PC-9 (cell line): ENCODE measurements at regions of chr20 and their contacts with region 1.

Region 1: DNA sequence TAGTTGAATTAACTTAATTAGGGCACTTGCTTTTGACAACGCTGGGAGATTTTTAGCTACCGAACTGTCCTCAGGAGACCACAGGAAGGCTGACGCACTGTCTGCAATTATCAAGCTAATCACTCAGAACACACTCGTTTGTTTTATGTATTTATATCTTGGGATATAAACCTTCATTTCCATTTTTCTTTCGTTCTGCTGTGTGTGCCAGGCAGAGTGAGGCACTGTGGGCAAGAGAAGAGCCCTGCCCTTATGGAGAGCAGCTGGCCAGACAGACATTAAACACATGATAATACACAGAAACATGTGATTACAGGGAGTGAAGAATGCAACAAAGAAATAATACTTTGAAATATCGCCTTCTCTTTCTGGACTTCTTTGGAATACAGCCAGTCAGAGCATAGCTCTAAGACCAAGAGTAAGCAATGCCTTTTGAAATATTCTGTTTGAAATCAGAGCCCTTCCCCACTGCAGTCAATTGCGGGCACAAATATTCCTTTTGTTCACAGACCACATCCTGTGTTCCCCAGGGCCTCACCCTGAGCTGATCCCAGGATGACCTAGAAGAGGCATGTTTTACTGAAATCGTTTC is 96.8 kb downstream of the ANKRD60 start:
- DNase-seq: peak; percentile 73 to 95
- H3K4me3 ChIP-seq: peak overlapping the region; percentile 35; the same call in 1 of the 2 replicates
- H3K27ac ChIP-seq: peak overlapping the region; percentile 87
- H3K4me1 ChIP-seq: peaks cover 97% of the 10 kb centered on the region
- H3K27me3 ChIP-seq: no peaks in the 10 kb centered on the region
- CTCF ChIP-seq: no peak

Region 2: DNA sequence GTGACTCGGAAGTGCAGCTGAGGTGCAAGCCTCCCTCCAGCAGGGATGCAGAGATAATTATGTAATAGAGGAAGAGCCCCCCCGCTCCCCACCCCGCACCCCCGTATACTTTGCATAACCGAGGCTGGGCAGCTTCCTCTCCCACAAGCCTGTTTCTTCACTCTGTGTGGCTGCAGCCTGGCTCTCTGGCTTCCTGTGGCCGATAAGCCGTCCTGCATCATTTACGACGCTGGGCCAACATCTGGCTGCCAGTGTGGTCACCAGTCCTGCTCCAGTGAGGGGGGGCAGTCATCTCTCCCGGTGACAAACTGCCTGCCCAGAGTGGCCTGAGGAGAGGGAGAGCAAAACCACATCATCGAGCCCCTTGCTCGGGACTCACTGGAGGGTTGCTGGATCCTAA is 681.2 kb before region 1 on chr20:
- CTCF ChIA-PET with region 1: no interaction called
- POLR2A ChIA-PET with region 1: interaction called, 11 read pairs
- intact Hi-C with region 1: no loop called
- DNase-seq: no peak
- H3K4me3 ChIP-seq: no peak overlapping the region
- H3K27ac ChIP-seq: no peak overlapping the region
- H3K4me1 ChIP-seq: peaks cover 6% of the 10 kb centered on the region; the same call in 1 of the 2 replicates
- H3K27me3 ChIP-seq: peaks cover 83% of the 10 kb centered on the region
- CTCF ChIP-seq: no peak

Region 3: GRCh38 chr20:57738481-57738880 is 393.2 kb before region 1 on chr20:
- CTCF ChIA-PET with region 1: no interaction called
- POLR2A ChIA-PET with region 1: interaction called, 10 read pairs
- intact Hi-C with region 1: no loop called
- DNase-seq: no peak
- H3K4me3 ChIP-seq: no peak overlapping the region
- H3K27ac ChIP-seq: no peak overlapping the region
- H3K4me1 ChIP-seq: no peaks in the 10 kb centered on the region
- H3K27me3 ChIP-seq: no peaks in the 10 kb centered on the region
- CTCF ChIP-seq: no peak

Region 4: GRCh38 chr20:58078741-58079522 is 52.7 kb before region 1 on chr20:
- CTCF ChIA-PET with region 1: no interaction called
- POLR2A ChIA-PET with region 1: interaction called, 26 read pairs
- intact Hi-C with region 1: no loop called
- DNase-seq: no peak
- H3K4me3 ChIP-seq: no peak overlapping the region
- H3K27ac ChIP-seq: no peak overlapping the region
- H3K4me1 ChIP-seq: peaks cover 16% of the 10 kb centered on the region
- H3K27me3 ChIP-seq: no peaks in the 10 kb centered on the region
- CTCF ChIP-seq: no peak

Region 5: GRCh38 chr20:58087193-58087858 is 44.3 kb before region 1 on chr20:
- CTCF ChIA-PET with region 1: interaction called, 3 read pairs
- POLR2A ChIA-PET with region 1: no interaction called
- intact Hi-C with region 1: loop called (anchors 2 kb)
- DNase-seq: peak; percentile 50 to 52
- H3K4me3 ChIP-seq: no peak overlapping the region
- H3K27ac ChIP-seq: no peak overlapping the region
- H3K4me1 ChIP-seq: 0 out of 2 replicates have a peak, but pooled peaks cover 9% of the 10 kb centered on the region
- H3K27me3 ChIP-seq: no peaks in the 10 kb centered on the region
- CTCF ChIP-seq: peak; percentile 95

Region 6: GRCh38 chr20:58112017-58112781 is 19.4 kb before region 1 on chr20:
- CTCF ChIA-PET with region 1: interaction called, 9 read pairs
- POLR2A ChIA-PET with region 1: interaction called, 11 read pairs
- intact Hi-C with region 1: loop called (anchors 1 kb)
- DNase-seq: peak; percentile 72 to 98
- H3K4me3 ChIP-seq: no peak overlapping the region
- H3K27ac ChIP-seq: peak overlapping the region; percentile 86
- H3K4me1 ChIP-seq: peaks cover 59% of the 10 kb centered on the region
- H3K27me3 ChIP-seq: no peaks in the 10 kb centered on the region
- CTCF ChIP-seq: no peak